ENCODE measurements at regions of chr17 and their contacts with region 1.

Region 1: GRCh38 chr17:2844416-2844815 is 48.2 kb downstream of the RAP1GAP2 start:
- DNase-seq: peak; percentile 9
- H3K4me3 Mint-ChIP-seq: no peak overlapping the region
- H3K27ac Mint-ChIP-seq: no peak overlapping the region
- H3K4me1 Mint-ChIP-seq: peaks cover 6% of the 10 kb centered on the region
- H3K27me3 Mint-ChIP-seq: no peaks in the 10 kb centered on the region
- CTCF ChIP-seq: no peak

Region 2: GRCh38 chr17:2828397-2829038 is 15.9 kb before region 1 on chr17:
- CTCF ChIA-PET with region 1: interaction called, 10 read pairs
- POLR2A ChIA-PET with region 1: no interaction called
- intact Hi-C with region 1: loop called (anchors 1 kb)
- DNase-seq: peak; percentile 69
- H3K4me3 Mint-ChIP-seq: no peak overlapping the region
- H3K27ac Mint-ChIP-seq: no peak overlapping the region
- H3K4me1 Mint-ChIP-seq: no peaks in the 10 kb centered on the region
- H3K27me3 Mint-ChIP-seq: no peaks in the 10 kb centered on the region
- CTCF ChIP-seq: peak; percentile 97

Region 3: GRCh38 chr17:2892305-2892971 is 48.0 kb after region 1 on chr17:
- CTCF ChIA-PET with region 1: interaction called, 20 read pairs
- POLR2A ChIA-PET with region 1: interaction called, 4 read pairs
- intact Hi-C with region 1: no loop called
- DNase-seq: peak; percentile 98
- H3K4me3 Mint-ChIP-seq: no peak overlapping the region
- H3K27ac Mint-ChIP-seq: peak overlapping the region; percentile 21
- H3K4me1 Mint-ChIP-seq: peaks cover 32% of the 10 kb centered on the region
- H3K27me3 Mint-ChIP-seq: no peaks in the 10 kb centered on the region
- CTCF ChIP-seq: no peak

Region 4: GRCh38 chr17:2937331-2938003 is 93.1 kb after region 1 on chr17:
- CTCF ChIA-PET with region 1: interaction called, 101 read pairs
- POLR2A ChIA-PET with region 1: no interaction called
- intact Hi-C with region 1: no loop called
- DNase-seq: no peak
- H3K4me3 Mint-ChIP-seq: no peak overlapping the region
- H3K27ac Mint-ChIP-seq: no peak overlapping the region
- H3K4me1 Mint-ChIP-seq: peaks cover 7% of the 10 kb centered on the region
- H3K27me3 Mint-ChIP-seq: no peaks in the 10 kb centered on the region
- CTCF ChIP-seq: no peak

Region 5: GRCh38 chr17:3012926-3013581 is 168.6 kb after region 1 on chr17:
- CTCF ChIA-PET with region 1: interaction called, 118 read pairs
- POLR2A ChIA-PET with region 1: interaction called, 3 read pairs
- intact Hi-C with region 1: loop called (anchors 1 kb)
- DNase-seq: peak; percentile 69
- H3K4me3 Mint-ChIP-seq: no peak overlapping the region
- H3K27ac Mint-ChIP-seq: no peak overlapping the region
- H3K4me1 Mint-ChIP-seq: no peaks in the 10 kb centered on the region
- H3K27me3 Mint-ChIP-seq: no peaks in the 10 kb centered on the region
- CTCF ChIP-seq: peak; percentile 66

Region 6: DNA sequence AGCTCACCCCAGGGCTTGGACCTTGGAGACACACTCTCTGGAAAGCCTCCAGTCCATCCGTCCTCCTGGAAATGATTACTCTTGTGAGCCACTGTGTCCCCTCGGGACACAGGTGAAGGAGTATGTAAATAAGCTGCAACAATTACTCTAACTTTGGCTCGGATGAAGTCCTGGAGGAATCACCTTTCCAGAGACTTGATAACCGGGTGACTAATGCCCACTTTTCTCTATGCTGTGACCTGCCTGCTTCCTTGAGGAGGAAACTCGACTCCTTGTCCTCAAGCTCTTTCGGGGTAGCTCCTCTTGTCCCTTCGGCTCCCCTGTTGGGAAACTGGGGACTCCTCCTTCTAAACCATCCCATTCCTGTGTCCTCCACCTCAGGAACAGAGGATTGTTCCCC is 363.0 kb after region 1 on chr17 and contains the start of gene OR1A1:
- CTCF ChIA-PET with region 1: no interaction called
- POLR2A ChIA-PET with region 1: no interaction called
- intact Hi-C with region 1: no loop called
- DNase-seq: no peak
- H3K4me3 Mint-ChIP-seq: no peak within 1 kb of the TSS
- H3K27ac Mint-ChIP-seq: no peak within 1 kb of the TSS
- H3K4me1 Mint-ChIP-seq: no peaks in the 10 kb centered on the region
- H3K27me3 Mint-ChIP-seq: peaks cover 43% of the 10 kb centered on the region
- CTCF ChIP-seq: no peak
- total RNA-seq, gene OR1A1: not detected in 2 replicates

Measured in MCF 10A (cell line).